Common myeloid progenitor, CD34-positive (primary cell): ENCODE measurements at regions of chr12 and their contacts with region 1.

Region 1: GRCh38 chr12:108701779-108702441 is 29.4 kb downstream of the CORO1C start:
- DNase-seq: peak in 2 of 3 donors; percentile 59 to 72
- H3K4me3 ChIP-seq: peak overlapping the region in 2 of 7 experiments; percentile 2 to 54
- H3K27ac ChIP-seq: peak overlapping the region; percentile 43 to 46
- H3K4me1 ChIP-seq: peaks cover 49 to 80% (median 72%) of the 10 kb centered on the region in 4 experiments
- H3K27me3 ChIP-seq: no peaks in the 10 kb centered on the region

Region 2: DNA sequence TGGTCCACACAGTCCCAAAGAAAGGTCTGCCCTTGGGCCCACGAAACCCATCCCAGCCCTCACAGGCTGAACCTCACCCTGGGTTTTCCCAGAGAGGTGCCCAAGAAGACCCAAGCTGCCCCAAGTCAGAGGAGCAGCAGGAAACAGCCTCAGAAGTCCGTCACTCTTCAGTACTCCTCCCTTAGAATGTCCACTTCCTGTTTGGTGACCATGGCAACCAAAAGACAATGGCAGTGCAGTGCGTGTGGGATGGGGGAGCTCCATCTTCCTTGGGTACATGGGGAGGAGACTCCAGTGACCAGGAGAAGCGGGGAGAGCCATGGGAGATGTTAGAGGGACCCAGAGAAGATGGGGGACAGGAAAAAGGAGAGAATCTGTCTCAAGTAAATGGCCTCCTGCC is 79.5 kb before region 1 on chr12:
- CTCF ChIA-PET with region 1: no interaction called
- POLR2A ChIA-PET with region 1: no interaction called
- DNase-seq: no peak
- H3K4me3 ChIP-seq: no peak overlapping the region
- H3K27ac ChIP-seq: peak overlapping the region in 1 of 2 experiments; percentile 32
- H3K4me1 ChIP-seq: peaks cover 0 to 37% (median 11%) of the 10 kb centered on the region in 4 experiments
- H3K27me3 ChIP-seq: no peaks in the 10 kb centered on the region

Region 3: DNA sequence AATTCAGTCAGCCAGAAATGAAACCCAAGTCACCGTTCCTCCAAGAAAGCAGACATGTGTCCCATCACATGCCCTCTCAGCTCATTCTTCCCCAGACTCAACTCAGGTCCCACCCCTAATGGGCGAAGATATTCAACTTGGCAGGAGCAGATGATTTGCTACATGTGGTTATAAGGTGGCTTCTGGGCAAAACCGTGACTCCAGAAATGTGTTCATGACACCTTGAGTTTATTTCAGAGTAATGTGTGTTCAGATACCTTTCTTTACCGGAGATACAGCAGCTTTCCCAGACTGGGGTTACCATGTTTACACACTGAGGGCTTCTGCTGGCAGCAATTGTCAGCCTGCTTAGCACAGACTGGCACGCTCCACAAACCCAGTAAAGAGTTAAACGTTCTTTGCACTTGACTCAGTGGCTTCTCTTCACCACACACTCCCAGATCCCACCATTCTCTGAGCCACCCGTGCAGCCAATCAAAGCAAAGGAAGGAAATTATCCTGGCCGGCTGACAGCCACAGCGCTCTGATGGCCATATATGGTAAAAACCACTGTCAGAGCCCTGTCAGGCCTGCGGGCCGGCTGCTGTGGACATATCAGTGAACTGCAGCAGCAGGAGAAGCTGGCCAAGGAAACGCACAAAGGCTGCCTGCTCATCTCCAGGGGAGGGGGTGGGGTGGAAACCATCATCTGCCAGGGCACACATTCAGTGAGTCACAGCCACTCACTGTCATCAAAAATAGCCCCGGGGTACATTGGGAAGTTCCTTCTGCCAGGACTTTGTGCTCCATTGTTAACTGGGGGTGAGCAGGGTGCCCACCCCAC is 10.5 kb before region 1 on chr12:
- CTCF ChIA-PET with region 1: interaction called, 20 read pairs
- POLR2A ChIA-PET with region 1: interaction called, 5 read pairs
- DNase-seq: peak; percentile 95 to 98 (median 98)
- H3K4me3 ChIP-seq: peak overlapping the region in 6 of 7 experiments; percentile 24 to 67 (median 56)
- H3K27ac ChIP-seq: peak overlapping the region; percentile 69 to 85
- H3K4me1 ChIP-seq: peaks cover 39 to 89% (median 76%) of the 10 kb centered on the region in 4 experiments
- H3K27me3 ChIP-seq: no peaks in the 10 kb centered on the region

Region 4: DNA sequence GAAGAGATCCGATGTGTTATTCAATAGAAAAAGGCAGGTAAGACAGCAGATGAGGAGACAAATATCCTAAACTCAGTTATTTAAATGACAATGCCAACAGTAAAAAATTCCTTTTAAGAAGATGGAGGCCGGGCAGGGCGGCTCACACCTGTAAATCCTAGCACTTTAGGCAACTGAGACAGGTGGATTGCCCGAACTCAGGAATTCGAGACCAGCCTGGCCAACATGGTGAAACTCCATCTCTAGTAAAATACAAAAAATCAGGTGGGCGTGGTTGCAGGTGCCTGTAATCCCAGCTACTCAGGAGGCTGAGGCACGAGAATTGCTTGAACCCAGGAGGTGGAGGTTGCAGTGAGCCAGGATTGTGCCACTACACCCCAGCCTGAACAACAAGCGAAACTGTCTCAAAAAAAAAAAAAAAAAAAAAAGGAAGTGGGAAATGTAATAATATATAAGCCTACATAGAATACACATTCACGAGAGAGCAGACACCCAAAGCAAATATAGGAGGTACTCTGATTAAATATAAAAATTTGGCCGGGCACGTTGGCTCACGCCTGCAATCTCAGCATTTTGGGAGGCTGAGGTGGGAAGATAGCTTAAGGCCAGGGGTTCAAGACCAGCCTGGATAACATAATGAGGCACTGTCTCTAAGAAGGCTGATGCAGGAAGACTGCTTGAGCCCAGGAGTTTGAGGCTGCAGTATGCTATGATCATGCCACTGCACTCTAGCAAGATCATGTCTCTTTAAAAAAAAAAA is 10.4 kb after region 1 on chr12:
- CTCF ChIA-PET with region 1: interaction called, 16 read pairs
- POLR2A ChIA-PET with region 1: interaction called, 3 read pairs
- DNase-seq: peak in 1 of 3 donors; percentile 45
- H3K4me3 ChIP-seq: peak overlapping the region in 2 of 7 experiments; percentile 40 to 56
- H3K27ac ChIP-seq: no peak overlapping the region
- H3K4me1 ChIP-seq: peaks cover 20 to 53% (median 39%) of the 10 kb centered on the region in 4 experiments
- H3K27me3 ChIP-seq: no peaks in the 10 kb centered on the region

Region 5: GRCh38 chr12:108967869-108968540 is 266.1 kb after region 1 on chr12:
- CTCF ChIA-PET with region 1: no interaction called
- POLR2A ChIA-PET with region 1: no interaction called
- DNase-seq: peak in 1 of 3 donors; percentile 4
- H3K4me3 ChIP-seq: no peak overlapping the region
- H3K27ac ChIP-seq: no peak overlapping the region
- H3K4me1 ChIP-seq: no peaks in the 10 kb centered on the region
- H3K27me3 ChIP-seq: peaks cover 0 to 3% (median 0%) of the 10 kb centered on the region in 5 experiments